Tibial artery (tissue), 4 donors: ENCODE measurements at regions of chr2 and their contacts with region 1.

Region 1: DNA sequence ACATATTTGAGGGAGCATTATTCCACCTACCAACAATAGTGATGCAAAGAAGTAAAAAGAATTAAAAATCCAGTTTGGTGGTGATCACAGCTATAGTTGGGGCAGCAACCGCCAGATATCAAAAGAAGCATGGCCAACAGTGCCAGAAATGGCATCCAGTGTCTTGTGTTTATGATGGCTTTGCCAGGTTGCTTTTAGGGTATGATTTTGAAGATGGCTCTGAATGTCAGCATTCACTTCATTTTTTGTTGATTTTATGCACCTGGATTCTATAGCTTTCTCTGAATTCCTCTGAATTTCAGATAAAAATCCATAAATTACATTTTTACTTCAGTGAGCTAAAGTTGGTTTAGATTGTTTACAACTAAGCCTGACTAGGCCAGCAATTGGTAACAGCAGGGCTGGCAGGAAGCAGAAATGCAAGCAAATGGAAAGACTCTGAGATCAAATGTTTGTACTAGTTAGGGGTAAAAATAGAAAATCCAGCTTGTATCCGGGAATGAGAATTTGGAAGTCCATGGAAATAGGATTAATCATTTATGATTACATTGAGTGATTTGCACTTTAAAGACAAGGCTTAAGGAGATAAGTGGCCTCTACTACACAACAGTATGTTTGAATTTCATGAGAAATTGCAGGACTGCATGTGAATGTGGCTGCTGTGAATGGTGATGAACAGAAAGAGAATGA is 40.4 kb downstream of the COL3A1 start:
- DNase-seq: no peak
- H3K4me3 ChIP-seq: no peak overlapping the region
- H3K27ac ChIP-seq: peak overlapping the region; percentile 47 to 55
- H3K4me1 ChIP-seq: peaks cover 0 to 60% (median 10%) of the 10 kb centered on the region in 4 donors
- H3K27me3 ChIP-seq: no peaks in the 10 kb centered on the region
- CTCF ChIP-seq: no peak

Region 2: GRCh38 chr2:188853307-188853706 is 161.3 kb before region 1 on chr2:
- intact Hi-C with region 1: no loop called
- DNase-seq: no peak
- H3K4me3 ChIP-seq: no peak overlapping the region
- H3K27ac ChIP-seq: no peak overlapping the region
- H3K4me1 ChIP-seq: peaks cover 0 to 9% (median 2%) of the 10 kb centered on the region in 4 donors
- H3K27me3 ChIP-seq: no peaks in the 10 kb centered on the region
- CTCF ChIP-seq: no peak

Region 3: GRCh38 chr2:189037518-189037917 is 22.9 kb after region 1 on chr2:
- intact Hi-C with region 1: loop called (anchors 2 kb)
- DNase-seq: no peak
- H3K4me3 ChIP-seq: no peak overlapping the region
- H3K27ac ChIP-seq: no peak overlapping the region
- H3K4me1 ChIP-seq: peaks cover 0 to 7% (median 0%) of the 10 kb centered on the region in 4 donors
- H3K27me3 ChIP-seq: no peaks in the 10 kb centered on the region
- CTCF ChIP-seq: no peak

Region 4: DNA sequence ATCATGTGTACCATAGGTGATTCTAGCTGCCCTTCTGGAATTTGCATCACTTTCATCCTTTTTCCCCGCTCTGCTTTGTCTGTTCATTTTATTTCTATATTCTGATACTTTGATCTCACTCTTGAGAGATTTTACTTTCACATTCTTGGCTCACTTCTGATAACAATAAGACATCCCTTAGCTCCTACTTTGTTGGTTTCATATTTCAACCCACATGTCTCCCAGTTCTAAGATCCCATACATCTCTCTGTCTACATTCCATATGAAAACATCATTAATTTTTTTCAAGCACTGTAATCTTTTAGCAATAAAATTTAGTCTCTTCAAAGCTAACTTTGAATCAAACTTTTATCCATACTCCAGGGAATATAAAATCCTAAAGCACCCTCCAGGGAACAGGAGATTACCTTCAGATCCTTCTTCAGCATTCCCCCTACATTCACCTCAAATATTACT is 35.1 kb after region 1 on chr2:
- intact Hi-C with region 1: loop called (anchors 5 kb)
- DNase-seq: no peak
- H3K4me3 ChIP-seq: no peak overlapping the region
- H3K27ac ChIP-seq: no peak overlapping the region
- H3K4me1 ChIP-seq: no peaks in the 10 kb centered on the region
- H3K27me3 ChIP-seq: no peaks in the 10 kb centered on the region
- CTCF ChIP-seq: no peak

Region 5: DNA sequence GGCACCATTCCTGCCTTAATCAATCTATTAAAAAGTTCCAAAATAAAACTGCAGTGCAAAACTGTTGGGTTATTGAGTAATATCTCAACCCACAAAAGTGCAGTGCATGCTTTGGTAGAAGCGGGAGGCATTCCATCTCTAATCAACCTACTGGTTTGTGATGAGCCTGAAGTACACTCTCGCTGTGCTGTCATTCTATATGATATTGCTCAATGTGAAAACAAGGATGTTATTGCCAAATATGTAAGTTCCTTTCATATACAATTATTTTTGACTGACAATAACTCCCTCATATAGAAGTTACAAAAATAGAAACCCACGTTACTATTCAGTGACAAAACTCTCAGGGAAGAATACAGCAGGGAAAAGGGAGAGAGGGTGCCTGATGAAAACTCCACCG is 705.0 kb after region 1 on chr2:
- intact Hi-C with region 1: no loop called
- DNase-seq: no peak
- H3K4me3 ChIP-seq: no peak overlapping the region
- H3K27ac ChIP-seq: no peak overlapping the region
- H3K4me1 ChIP-seq: no peaks in the 10 kb centered on the region
- H3K27me3 ChIP-seq: no peaks in the 10 kb centered on the region
- CTCF ChIP-seq: no peak